ENCODE measurements at regions of chr2 and their contacts with region 1.

Region 1: GRCh38 chr2:75570948-75571729 is 10.4 kb upstream of the EVA1A start:
- DNase-seq: no peak
- H3K4me3 ChIP-seq: no peak overlapping the region
- H3K27me3 ChIP-seq: no peaks in the 10 kb centered on the region
- CTCF ChIP-seq: no peak

Region 2: GRCh38 chr2:74553892-74554645 is 1017.1 kb before region 1 on chr2 and contains the start of gene LOXL3:
- CTCF ChIA-PET with region 1: no interaction called
- POLR2A ChIA-PET with region 1: interaction called, 18 read pairs
- DNase-seq: peak; percentile 50
- H3K4me3 ChIP-seq: peak within 1 kb of the TSS; percentile 54
- H3K27me3 ChIP-seq: no peaks in the 10 kb centered on the region
- CTCF ChIP-seq: no peak
- polyA plus RNA-seq, gene LOXL3: 95.8 and 130 TPM in 2 replicates

Region 3: DNA sequence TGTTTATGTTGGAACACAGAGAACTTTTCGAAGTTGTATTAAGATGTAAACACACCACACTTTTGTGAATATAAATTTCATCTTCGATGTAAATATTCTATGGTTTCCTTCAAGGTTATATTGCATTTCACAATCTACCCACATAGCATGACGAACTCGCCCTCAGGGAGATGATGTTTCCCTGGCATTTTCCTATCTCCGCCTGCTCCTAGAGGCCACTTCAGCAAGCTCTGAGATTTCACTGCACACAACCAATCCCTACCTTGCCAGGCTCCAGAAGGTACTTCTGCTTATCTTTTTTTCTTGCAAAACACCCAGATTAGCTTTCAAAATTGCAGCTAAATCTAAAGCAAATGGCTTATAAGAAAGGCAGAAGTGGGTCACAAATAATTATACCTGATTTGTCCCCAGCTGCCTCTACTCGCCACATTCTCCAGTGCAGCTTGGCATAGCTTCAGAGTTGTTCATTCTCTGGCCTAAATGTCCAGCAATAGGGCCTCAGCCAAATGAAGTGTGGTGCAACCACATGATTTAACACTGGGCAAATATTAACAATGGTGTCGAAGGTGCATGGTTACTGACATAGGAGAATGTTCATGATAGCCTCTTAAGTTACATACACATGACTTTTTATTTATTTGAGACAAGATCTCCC is 43.0 kb after region 1 on chr2:
- CTCF ChIA-PET with region 1: interaction called, 41 read pairs
- POLR2A ChIA-PET with region 1: no interaction called
- DNase-seq: no peak
- H3K4me3 ChIP-seq: no peak overlapping the region
- H3K27me3 ChIP-seq: peaks cover 1% of the 10 kb centered on the region
- CTCF ChIP-seq: no peak